Breast epithelium (tissue), 4 donors: ENCODE measurements at regions of chr18 and their contacts with region 1.

Region 1: GRCh38 chr18:68275616-68276015 is 439.3 kb downstream of the TMX3 start:
- DNase-seq: no peak
- H3K4me3 ChIP-seq: no peak overlapping the region
- H3K27ac ChIP-seq: no peak overlapping the region
- H3K4me1 ChIP-seq: no peaks in the 10 kb centered on the region
- H3K27me3 ChIP-seq: no peaks in the 10 kb centered on the region
- CTCF ChIP-seq: no peak
- POLR2A ChIP-seq: no peak

Region 2: GRCh38 chr18:68608851-68609490 is 333.4 kb after region 1 on chr18:
- intact Hi-C with region 1: loop called (anchors 5 kb)
- DNase-seq: no peak
- H3K4me3 ChIP-seq: no peak overlapping the region
- H3K27ac ChIP-seq: no peak overlapping the region
- H3K4me1 ChIP-seq: no peaks in the 10 kb centered on the region
- H3K27me3 ChIP-seq: no peaks in the 10 kb centered on the region
- CTCF ChIP-seq: no peak
- POLR2A ChIP-seq: no peak